ENCODE measurements at regions of chr15 and their contacts with region 1.

Region 1: GRCh38 chr15:58331903-58332675 is 99.7 kb upstream of the LIPC start:
- DNase-seq: peak; percentile 99
- H3K4me3 ChIP-seq: peak overlapping the region; percentile 7; the same call in 1 of the 2 replicates
- H3K27ac ChIP-seq: peak overlapping the region; percentile 99
- H3K27me3 ChIP-seq: no peaks in the 10 kb centered on the region
- CTCF ChIP-seq: no peak

Region 2: DNA sequence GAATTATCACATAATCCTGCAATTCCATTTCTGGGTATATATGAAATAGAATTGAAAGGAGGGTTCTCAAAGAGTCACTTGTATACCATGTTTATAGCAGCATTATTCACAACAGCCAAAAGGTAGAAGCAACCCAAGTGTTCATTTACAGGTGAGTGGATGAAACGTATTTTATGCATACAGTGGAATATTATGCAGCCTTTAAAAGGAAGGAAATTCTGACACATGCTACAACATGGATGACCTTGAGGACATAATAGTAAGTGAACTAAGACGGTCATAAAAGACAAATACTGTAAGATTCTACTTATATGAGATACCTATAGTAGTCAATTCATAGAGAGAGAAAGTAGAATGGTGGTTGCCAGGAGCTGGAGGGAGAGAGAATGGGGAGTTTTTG is 11.1 kb before region 1 on chr15:
- CTCF ChIA-PET with region 1: no interaction called
- POLR2A ChIA-PET with region 1: no interaction called
- DNase-seq: no peak
- H3K4me3 ChIP-seq: no peak overlapping the region
- H3K27ac ChIP-seq: no peak overlapping the region
- H3K27me3 ChIP-seq: no peaks in the 10 kb centered on the region
- CTCF ChIP-seq: no peak

Region 3: GRCh38 chr15:58361291-58361759 is 29.2 kb after region 1 on chr15:
- CTCF ChIA-PET with region 1: no interaction called
- POLR2A ChIA-PET with region 1: interaction called, 25 read pairs
- DNase-seq: peak; percentile 97
- H3K4me3 ChIP-seq: peak overlapping the region; percentile 5; the same call in 1 of the 2 replicates
- H3K27ac ChIP-seq: peak overlapping the region; percentile 96
- H3K27me3 ChIP-seq: no peaks in the 10 kb centered on the region
- CTCF ChIP-seq: no peak

Region 4: DNA sequence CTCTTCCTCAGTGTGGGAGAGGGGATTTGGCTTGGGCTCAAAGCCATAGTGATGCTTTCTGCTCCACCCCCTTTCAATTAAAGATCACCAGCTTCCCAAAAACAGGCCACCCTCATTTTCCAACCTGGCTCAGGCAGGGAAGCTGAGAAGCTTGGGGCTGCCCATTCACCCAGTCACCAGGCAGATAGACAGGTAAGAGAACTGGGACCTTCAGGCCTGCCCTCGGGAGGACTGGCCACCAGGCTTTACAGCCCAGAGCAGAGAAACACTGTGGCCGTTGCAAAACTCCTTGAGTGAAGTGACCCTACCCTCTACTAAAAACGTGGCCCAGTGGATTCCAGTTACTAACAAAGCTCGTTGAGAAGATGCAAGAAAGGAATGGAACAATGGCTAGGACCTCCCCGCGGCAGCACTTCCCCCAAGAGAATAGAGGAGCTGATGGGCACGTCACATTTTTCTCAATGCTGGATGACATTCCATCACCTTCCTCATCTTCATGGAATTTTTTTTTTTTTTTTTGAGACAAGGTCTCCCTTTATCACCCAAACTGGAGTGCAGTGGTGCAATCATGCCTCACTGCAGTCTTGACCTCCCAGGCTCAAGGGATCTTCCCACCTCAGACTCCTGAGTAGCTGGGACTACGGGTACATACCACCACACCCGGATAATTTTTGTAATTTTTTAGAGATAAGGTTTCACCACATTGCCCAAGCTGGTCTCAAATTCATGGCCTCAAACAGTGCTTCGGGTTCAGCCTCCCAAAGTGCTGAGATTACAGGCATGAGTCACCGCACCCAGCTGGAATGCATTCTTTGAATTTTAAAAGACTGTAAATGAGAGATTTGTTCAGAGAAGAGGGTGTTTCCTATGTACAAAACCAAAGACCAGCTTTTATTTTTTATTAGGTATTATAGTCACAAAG is 137.6 kb after region 1 on chr15:
- CTCF ChIA-PET with region 1: no interaction called
- POLR2A ChIA-PET with region 1: interaction called, 13 read pairs
- DNase-seq: peak; percentile 92
- H3K4me3 ChIP-seq: no peak overlapping the region
- H3K27ac ChIP-seq: peak overlapping the region; percentile 98
- H3K27me3 ChIP-seq: no peaks in the 10 kb centered on the region
- CTCF ChIP-seq: no peak

Region 5: DNA sequence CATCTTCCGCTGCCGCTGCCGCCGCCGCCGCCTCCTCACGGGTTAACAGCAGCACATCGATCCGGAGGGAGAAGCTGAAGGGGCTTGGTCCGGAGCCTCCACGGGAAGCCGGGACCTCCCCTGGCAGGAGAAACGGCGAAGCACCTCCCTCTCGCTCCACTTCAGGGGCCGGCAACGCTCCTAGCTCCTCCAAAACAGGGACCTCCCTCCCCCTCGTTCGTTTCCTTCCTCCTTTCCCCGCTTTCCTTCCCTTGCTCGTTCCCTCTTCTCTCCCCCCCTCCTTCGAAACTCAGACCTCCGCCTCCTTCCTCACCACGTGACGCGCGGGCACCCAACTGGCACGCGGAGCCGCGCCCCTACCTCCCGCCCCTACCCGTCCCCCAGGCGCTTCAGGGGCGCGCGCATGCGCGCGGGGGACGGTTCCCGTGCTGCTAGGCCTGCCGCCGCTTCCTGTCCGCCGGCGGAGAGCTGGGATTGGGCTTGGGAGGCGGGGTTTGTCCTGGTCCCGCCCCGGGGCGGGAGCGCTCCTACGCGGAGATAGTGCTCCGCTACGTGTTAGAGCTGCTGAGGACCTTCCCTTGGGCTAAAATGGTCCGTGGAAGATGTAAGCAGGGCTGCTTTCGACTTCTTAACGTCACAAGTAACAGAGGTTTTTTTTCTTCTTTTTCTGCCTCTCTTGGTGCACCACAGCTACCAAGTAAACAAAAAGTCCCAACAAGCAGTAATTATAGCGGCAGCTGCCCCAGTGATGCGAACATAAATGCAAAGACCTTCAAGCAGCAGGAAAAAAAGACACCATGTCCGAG is 417.6 kb after region 1 on chr15 and contains the start of gene ADAM10:
- CTCF ChIA-PET with region 1: no interaction called
- POLR2A ChIA-PET with region 1: interaction called, 16 read pairs
- DNase-seq: peak; percentile 98
- H3K4me3 ChIP-seq: peak within 1 kb of the TSS; percentile 70
- H3K27ac ChIP-seq: peak within 1 kb of the TSS; percentile 93
- H3K27me3 ChIP-seq: no peaks in the 10 kb centered on the region
- CTCF ChIP-seq: no peak
- polyA plus RNA-seq, gene ADAM10: 198 and 220 TPM in 2 replicates

Region 6: DNA sequence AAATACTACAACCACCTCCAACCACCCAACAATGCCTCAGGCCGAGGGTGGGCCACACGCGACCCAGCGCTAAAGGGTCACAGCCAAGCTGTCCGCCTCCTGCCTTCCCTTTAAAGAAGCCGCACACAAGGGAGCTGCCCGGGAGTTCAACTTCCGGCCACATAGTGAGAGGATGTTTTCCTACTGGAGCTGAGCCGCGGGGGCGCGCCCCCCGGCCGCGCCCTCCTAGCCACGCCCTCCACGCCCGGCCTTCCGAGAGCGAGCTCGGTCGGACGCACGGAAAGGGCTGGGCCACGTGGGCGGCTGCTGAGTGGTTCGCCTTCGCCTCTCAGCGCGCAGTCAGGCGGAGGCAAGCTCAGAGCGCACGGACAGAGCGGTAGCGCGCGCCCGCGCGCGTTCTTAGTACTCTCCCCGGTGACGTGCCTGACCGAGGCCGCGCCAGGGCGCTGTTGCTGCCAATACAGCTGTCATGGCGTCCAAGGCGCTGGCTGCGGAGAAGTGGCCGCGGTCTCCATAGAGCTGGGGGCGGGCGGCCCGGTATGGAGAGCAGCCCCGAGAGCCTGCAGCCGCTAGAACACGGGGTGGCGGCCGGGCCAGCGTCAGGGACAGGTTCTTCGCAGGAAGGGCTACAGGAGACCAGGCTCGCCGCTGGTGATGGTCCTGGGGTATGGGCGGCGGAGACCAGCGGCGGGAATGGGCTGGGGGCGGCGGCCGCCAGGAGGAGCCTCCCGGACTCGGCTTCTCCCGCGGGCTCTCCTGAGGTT is 438.9 kb after region 1 on chr15 and contains the start of gene MINDY2:
- CTCF ChIA-PET with region 1: no interaction called
- POLR2A ChIA-PET with region 1: interaction called, 21 read pairs
- DNase-seq: peak; percentile 98
- H3K4me3 ChIP-seq: peak within 1 kb of the TSS; percentile 79
- H3K27ac ChIP-seq: peak within 1 kb of the TSS; percentile 97
- H3K27me3 ChIP-seq: no peaks in the 10 kb centered on the region
- CTCF ChIP-seq: peak; percentile 36
- polyA plus RNA-seq, gene MINDY2: 11.0 and 17.5 TPM in 2 replicates

Measured in AG04450 (cell line).